Activated B cell treated with CpG ODN at 0.5 μM for 24 hours (primary cell): ENCODE measurements at regions of chr11 and their contacts with region 1.

Region 1: GRCh38 chr11:94417386-94417987 is 16.3 kb upstream of the GPR83 start:
- DNase-seq: no peak
- ATAC-seq: no peak
- H3K4me3 Mint-ChIP-seq: no peak overlapping the region
- H3K27ac Mint-ChIP-seq: no peak overlapping the region
- H3K4me1 Mint-ChIP-seq: no peaks in the 10 kb centered on the region
- H3K27me3 Mint-ChIP-seq: no peaks in the 10 kb centered on the region
- CTCF ChIP-seq: no peak

Region 2: DNA sequence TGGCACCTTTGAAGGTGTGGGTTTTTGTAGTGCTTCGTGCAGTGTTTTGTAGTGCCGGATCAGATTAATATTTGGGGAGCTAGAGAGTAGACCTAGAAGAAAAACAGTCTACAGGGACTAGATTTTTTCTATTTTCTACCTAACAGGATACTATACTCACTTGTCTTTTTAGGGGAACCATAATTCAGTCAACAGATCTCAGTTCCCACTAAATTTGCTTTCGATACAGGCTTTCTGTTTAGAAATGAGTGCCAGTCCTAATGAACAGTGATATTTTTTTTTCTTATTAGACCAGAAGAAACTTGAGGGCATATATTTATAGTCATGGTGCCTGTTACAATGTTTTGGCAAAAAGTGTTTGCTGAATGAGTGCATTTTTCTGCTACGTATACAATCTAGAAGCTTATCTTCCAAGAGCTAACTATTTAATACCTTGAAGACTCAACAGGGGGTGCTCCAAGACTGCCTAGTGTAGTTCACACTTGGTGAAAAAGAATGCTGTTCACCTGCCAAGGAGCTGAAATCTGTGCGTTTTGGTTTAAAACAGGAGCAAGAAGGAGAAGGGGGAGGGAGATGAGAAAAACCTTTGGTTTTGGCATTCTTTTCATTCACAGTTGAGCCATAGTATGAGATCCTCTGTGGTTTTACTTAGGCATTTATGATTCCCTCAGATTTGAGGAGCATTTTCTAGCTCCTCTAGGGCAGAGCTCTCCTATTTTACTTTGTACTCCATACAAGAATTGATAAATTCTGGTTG is 522.2 kb before region 1 on chr11:
- CTCF ChIA-PET with region 1: interaction called, 5 read pairs
- POLR2A ChIA-PET with region 1: no interaction called
- intact Hi-C with region 1: loop called (anchors 1 kb)
- DNase-seq: no peak
- ATAC-seq: peak; percentile 31
- H3K4me3 Mint-ChIP-seq: no peak overlapping the region
- H3K27ac Mint-ChIP-seq: no peak overlapping the region
- H3K4me1 Mint-ChIP-seq: no peaks in the 10 kb centered on the region
- H3K27me3 Mint-ChIP-seq: peaks cover 29% of the 10 kb centered on the region
- CTCF ChIP-seq: no peak

Region 3: GRCh38 chr11:94088906-94089305 is 328.6 kb before region 1 on chr11:
- CTCF ChIA-PET with region 1: no interaction called
- POLR2A ChIA-PET with region 1: no interaction called
- intact Hi-C with region 1: no loop called
- DNase-seq: no peak
- ATAC-seq: no peak
- H3K4me3 Mint-ChIP-seq: no peak overlapping the region
- H3K27ac Mint-ChIP-seq: no peak overlapping the region
- H3K4me1 Mint-ChIP-seq: no peaks in the 10 kb centered on the region
- H3K27me3 Mint-ChIP-seq: peaks cover 3% of the 10 kb centered on the region
- CTCF ChIP-seq: no peak

Region 4: GRCh38 chr11:94400839-94401772 is 16.4 kb before region 1 on chr11 and contains the start of gene GPR83:
- CTCF ChIA-PET with region 1: no interaction called
- POLR2A ChIA-PET with region 1: no interaction called
- intact Hi-C with region 1: no loop called
- DNase-seq: no peak
- ATAC-seq: no peak
- H3K4me3 Mint-ChIP-seq: no peak within 1 kb of the TSS
- H3K27ac Mint-ChIP-seq: no peak within 1 kb of the TSS
- H3K4me1 Mint-ChIP-seq: peaks cover 7% of the 10 kb centered on the region
- H3K27me3 Mint-ChIP-seq: peaks cover 46% of the 10 kb centered on the region
- CTCF ChIP-seq: no peak
- total RNA-seq, gene GPR83: 0.16 and 0.17 TPM in 2 replicates